Activated naive CD8-positive, alpha-beta T cell treated with anti-CD3 and anti-CD28 coated beads, Interleukin-2, amount 10 ng/mL, durations not matched to agents 7 days and 5 days (primary cell): ENCODE measurements at regions of chr3 and their contacts with region 1.

Region 1: DNA sequence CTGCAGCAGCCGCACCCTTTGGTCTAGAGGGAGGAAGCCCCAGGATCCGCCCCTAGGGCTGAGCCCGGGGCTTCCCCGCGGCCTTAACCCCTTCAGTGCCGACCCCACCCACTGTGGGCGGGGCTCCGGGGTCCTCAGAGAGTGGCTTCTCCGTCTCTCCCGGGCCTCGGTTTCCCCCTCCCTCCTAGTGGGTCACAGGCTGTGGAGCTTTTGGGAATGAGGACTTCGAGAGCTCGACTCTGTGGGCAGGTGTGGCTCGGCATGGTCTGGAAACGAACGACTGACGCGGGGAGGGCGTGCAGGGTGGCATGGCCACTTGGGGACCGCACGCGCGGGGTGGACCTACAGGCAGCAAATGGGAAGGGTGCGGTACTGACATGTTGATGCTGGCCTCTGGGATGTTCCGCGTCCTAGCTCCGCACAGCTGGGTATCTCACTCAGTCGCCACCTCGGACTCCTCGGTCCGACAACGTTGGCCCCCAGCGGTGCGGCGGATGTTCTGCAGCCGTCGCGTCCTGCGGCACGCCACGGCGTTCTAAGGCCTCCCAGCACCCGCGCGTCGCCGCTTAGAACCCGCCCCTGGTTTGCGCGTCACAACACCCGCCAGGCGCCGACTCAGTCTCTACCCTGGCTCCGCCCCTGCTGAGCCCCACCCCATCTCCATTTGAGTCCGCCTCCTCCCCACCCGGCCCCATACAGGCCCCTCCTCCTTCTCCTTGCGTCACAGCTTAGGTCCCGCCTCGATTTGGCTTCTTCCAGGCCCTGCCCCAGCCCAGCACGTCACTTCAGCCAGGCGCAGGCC is at the starts of genes HYAL3 and NAA80:
- DNase-seq: peak; percentile 98
- ATAC-seq: peak; percentile 84
- H3K4me3 Mint-ChIP-seq: peak within 1 kb of the TSS; percentile 96
- H3K27ac Mint-ChIP-seq: peak within 1 kb of the TSS; percentile 98
- H3K4me1 Mint-ChIP-seq: peaks cover 18% of the 10 kb centered on the region
- H3K27me3 Mint-ChIP-seq: no peaks in the 10 kb centered on the region
- total RNA-seq, gene HYAL3: 5.9 to 7.0 TPM
- total RNA-seq, gene NAA80: 34.3 to 37.7 TPM

Region 2: GRCh38 chr3:49886922-49887265 is 412.1 kb before region 1 on chr3:
- POLR2A ChIA-PET with region 1: no interaction called
- DNase-seq: no peak
- ATAC-seq: no peak
- H3K4me3 Mint-ChIP-seq: no peak overlapping the region
- H3K27ac Mint-ChIP-seq: no peak overlapping the region
- H3K4me1 Mint-ChIP-seq: peaks cover 3% of the 10 kb centered on the region
- H3K27me3 Mint-ChIP-seq: peaks cover 3% of the 10 kb centered on the region

Region 3: DNA sequence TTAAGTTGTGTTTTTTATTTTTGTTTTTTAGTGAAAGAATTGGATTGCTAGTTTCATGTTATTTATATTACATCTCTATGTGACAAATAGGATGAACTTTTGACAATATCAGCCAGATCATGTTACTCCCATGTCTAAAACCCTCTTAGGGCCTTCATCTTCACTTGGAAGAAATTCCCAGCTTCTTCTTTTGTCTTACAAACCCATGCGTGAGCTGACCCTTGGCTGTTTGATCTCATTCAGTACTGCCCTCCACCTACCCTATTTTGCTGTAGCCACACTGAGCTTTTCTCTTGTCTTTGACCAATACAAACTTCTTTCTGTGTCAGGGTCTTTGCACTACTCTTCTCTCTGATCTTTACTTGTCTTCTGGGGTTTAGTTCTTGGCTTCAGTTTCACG is 322.1 kb before region 1 on chr3:
- POLR2A ChIA-PET with region 1: no interaction called
- DNase-seq: no peak
- ATAC-seq: no peak
- H3K4me3 Mint-ChIP-seq: no peak overlapping the region
- H3K27ac Mint-ChIP-seq: no peak overlapping the region
- H3K4me1 Mint-ChIP-seq: no peaks in the 10 kb centered on the region
- H3K27me3 Mint-ChIP-seq: no peaks in the 10 kb centered on the region

Region 4: DNA sequence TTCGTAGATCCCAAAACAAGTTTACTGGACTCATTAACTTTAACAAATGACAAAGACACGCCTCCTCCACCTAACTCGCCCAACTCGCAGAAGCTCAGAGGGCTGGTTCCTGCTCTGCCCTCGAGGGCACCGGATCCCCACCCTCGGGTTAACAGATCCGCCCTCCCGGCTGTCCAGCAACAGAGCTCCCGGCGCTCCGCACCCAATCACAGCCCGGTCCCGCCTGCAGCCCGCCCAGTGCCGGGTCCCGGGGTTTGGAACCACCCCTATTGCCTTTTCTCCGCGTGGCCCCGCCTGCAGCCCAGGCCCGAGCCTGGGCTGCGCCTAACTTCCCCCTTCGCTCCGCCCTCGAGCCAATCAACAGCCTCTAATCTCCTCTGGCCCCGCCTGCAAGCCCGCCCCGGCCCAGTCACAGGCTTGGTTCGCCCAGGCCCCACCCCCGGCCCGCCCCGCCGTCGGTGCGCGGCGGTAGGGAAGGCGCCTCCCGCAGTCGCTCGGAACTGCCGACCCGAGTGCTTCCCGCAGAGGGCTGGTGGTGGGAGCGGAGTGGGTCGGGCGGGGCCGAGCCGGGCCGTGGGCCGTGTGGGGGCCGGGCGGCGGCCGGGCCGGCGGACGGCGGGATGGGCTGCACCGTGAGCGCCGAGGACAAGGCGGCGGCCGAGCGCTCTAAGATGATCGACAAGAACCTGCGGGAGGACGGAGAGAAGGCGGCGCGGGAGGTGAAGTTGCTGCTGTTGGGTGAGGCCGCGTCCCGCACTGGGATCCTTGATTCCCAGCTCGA is 63.1 kb before region 1 on chr3 and contains the start of gene GNAI2:
- POLR2A ChIA-PET with region 1: interaction called, 12 read pairs
- DNase-seq: peak; percentile 98
- ATAC-seq: peak; percentile 90
- H3K4me3 Mint-ChIP-seq: peak within 1 kb of the TSS; percentile 100
- H3K27ac Mint-ChIP-seq: peak within 1 kb of the TSS; percentile 99
- H3K4me1 Mint-ChIP-seq: peaks cover 22% of the 10 kb centered on the region
- H3K27me3 Mint-ChIP-seq: no peaks in the 10 kb centered on the region
- total RNA-seq, gene GNAI2: 435 to 448 TPM

Region 5: GRCh38 chr3:50314342-50314741 is 15.3 kb after region 1 on chr3:
- POLR2A ChIA-PET with region 1: interaction called, 10 read pairs
- DNase-seq: no peak
- ATAC-seq: no peak
- H3K4me3 Mint-ChIP-seq: no peak overlapping the region
- H3K27ac Mint-ChIP-seq: no peak overlapping the region
- H3K4me1 Mint-ChIP-seq: peaks cover 21% of the 10 kb centered on the region
- H3K27me3 Mint-ChIP-seq: no peaks in the 10 kb centered on the region

Region 6: GRCh38 chr3:50321336-50322114 is 22.5 kb after region 1 on chr3:
- POLR2A ChIA-PET with region 1: interaction called, 10 read pairs
- DNase-seq: peak; percentile 91
- ATAC-seq: peak; percentile 75
- H3K4me3 Mint-ChIP-seq: peak overlapping the region; percentile 82
- H3K27ac Mint-ChIP-seq: peak overlapping the region; percentile 93
- H3K4me1 Mint-ChIP-seq: peaks cover 23% of the 10 kb centered on the region
- H3K27me3 Mint-ChIP-seq: no peaks in the 10 kb centered on the region

Region 7: GRCh38 chr3:50327943-50328691 is 29.1 kb after region 1 on chr3 and contains the start of gene TUSC2:
- POLR2A ChIA-PET with region 1: interaction called, 10 read pairs
- DNase-seq: peak; percentile 95
- ATAC-seq: peak; percentile 87
- H3K4me3 Mint-ChIP-seq: peak within 1 kb of the TSS; percentile 95
- H3K27ac Mint-ChIP-seq: peak within 1 kb of the TSS; percentile 88
- H3K4me1 Mint-ChIP-seq: peaks cover 23% of the 10 kb centered on the region
- H3K27me3 Mint-ChIP-seq: no peaks in the 10 kb centered on the region
- total RNA-seq, gene TUSC2: 20.2 to 20.8 TPM